Caco-2 (cell line): ENCODE measurements at regions of chr3 and their contacts with region 1.

Region 1: GRCh38 chr3:136577792-136578191 is 174.4 kb downstream of the STAG1 start:
- DNase-seq: peak; percentile 31 to 39
- H3K4me3 ChIP-seq: no peak overlapping the region
- H3K4me3 Mint-ChIP-seq: peak overlapping the region; percentile 5
- H3K27ac Mint-ChIP-seq: peak overlapping the region; percentile 71
- H3K4me1 ChIP-seq: peaks cover 45% of the 10 kb centered on the region
- H3K4me1 Mint-ChIP-seq: peaks cover 30% of the 10 kb centered on the region
- H3K27me3 ChIP-seq: no peaks in the 10 kb centered on the region
- H3K27me3 Mint-ChIP-seq: no peaks in the 10 kb centered on the region
- CTCF ChIP-seq: peak in 1 of 2 experiments; percentile 4

Region 2: GRCh38 chr3:136512381-136512780 is 65.4 kb before region 1 on chr3:
- CTCF ChIA-PET with region 1: no interaction called
- POLR2A ChIA-PET with region 1: no interaction called
- intact Hi-C with region 1: no loop called
- DNase-seq: no peak
- H3K4me3 ChIP-seq: no peak overlapping the region
- H3K4me3 Mint-ChIP-seq: no peak overlapping the region
- H3K27ac Mint-ChIP-seq: no peak overlapping the region
- H3K4me1 ChIP-seq: no peaks in the 10 kb centered on the region
- H3K4me1 Mint-ChIP-seq: no peaks in the 10 kb centered on the region
- H3K27me3 ChIP-seq: no peaks in the 10 kb centered on the region
- H3K27me3 Mint-ChIP-seq: no peaks in the 10 kb centered on the region
- CTCF ChIP-seq: no peak

Region 3: DNA sequence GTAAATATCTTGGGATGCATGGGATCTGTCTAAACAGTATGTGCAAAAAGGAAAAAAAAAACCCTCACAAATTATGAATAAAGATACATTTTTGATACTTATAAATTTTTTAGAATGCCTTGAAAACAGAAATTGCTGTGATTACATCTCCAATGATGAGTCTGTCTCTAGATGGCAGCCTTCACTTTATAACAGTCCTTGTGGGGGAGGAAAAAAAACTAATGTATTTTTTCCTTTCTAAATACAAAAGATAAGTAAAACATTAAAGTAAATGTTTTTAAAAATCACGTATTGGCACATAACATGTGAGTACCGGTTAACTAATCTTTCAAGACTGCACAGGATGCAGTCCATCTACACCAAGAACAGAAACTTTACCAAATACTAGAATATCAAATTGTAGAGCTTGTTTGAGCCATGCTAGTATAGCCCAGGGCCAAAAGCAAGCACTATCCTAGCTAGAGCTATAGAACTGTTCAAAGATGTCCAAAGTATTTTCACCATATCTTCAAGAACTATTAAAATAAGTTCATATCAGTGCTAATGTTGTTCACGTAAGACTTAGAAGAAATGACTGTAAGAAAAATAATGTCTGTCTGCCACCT is 32.0 kb before region 1 on chr3:
- CTCF ChIA-PET with region 1: interaction called, 5 read pairs
- POLR2A ChIA-PET with region 1: no interaction called
- intact Hi-C with region 1: loop called (anchors 2 kb)
- DNase-seq: no peak
- H3K4me3 ChIP-seq: no peak overlapping the region
- H3K4me3 Mint-ChIP-seq: no peak overlapping the region
- H3K27ac Mint-ChIP-seq: no peak overlapping the region
- H3K4me1 ChIP-seq: 0 out of 2 replicates have a peak, but pooled peaks cover 8% of the 10 kb centered on the region
- H3K4me1 Mint-ChIP-seq: peaks cover 10% of the 10 kb centered on the region
- H3K27me3 ChIP-seq: no peaks in the 10 kb centered on the region
- H3K27me3 Mint-ChIP-seq: no peaks in the 10 kb centered on the region
- CTCF ChIP-seq: peak; percentile 10 to 30

Region 4: GRCh38 chr3:136567599-136568188 is 10.1 kb before region 1 on chr3:
- CTCF ChIA-PET with region 1: no interaction called
- POLR2A ChIA-PET with region 1: no interaction called
- intact Hi-C with region 1: loop called (anchors 1 kb)
- DNase-seq: no peak
- H3K4me3 ChIP-seq: no peak overlapping the region
- H3K4me3 Mint-ChIP-seq: no peak overlapping the region
- H3K27ac Mint-ChIP-seq: no peak overlapping the region
- H3K4me1 ChIP-seq: peaks cover 10% of the 10 kb centered on the region
- H3K4me1 Mint-ChIP-seq: peaks cover 24% of the 10 kb centered on the region
- H3K27me3 ChIP-seq: no peaks in the 10 kb centered on the region
- H3K27me3 Mint-ChIP-seq: no peaks in the 10 kb centered on the region
- CTCF ChIP-seq: no peak

Region 5: GRCh38 chr3:136624894-136625815 is 47.4 kb after region 1 on chr3:
- CTCF ChIA-PET with region 1: no interaction called
- POLR2A ChIA-PET with region 1: no interaction called
- intact Hi-C with region 1: loop called (anchors 2 kb)
- DNase-seq: peak; percentile 73 to 80
- H3K4me3 ChIP-seq: no peak overlapping the region
- H3K4me3 Mint-ChIP-seq: peak overlapping the region; percentile 73
- H3K27ac Mint-ChIP-seq: peak overlapping the region; percentile 87
- H3K4me1 ChIP-seq: peaks cover 40% of the 10 kb centered on the region
- H3K4me1 Mint-ChIP-seq: peaks cover 36% of the 10 kb centered on the region
- H3K27me3 ChIP-seq: no peaks in the 10 kb centered on the region
- H3K27me3 Mint-ChIP-seq: no peaks in the 10 kb centered on the region
- CTCF ChIP-seq: no peak

Region 6: DNA sequence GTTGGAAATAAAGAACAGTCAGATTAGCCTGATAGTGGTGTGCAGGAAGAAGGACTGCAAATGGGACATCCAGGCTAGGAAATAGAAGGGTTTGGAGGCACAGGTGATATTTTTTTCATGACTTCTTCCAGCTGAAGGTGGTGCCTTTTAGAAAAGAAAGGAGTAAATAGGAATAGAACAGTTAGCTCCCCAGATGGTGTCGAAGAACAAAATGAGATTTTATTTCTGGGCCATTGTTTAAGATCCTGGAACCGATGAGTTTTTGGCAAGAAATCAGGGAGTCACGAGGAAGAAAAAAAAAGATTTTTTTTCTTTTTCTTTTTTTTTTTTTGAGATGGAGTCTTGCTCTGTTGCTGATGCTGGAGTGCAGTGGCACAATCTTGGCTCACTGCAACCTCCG is 274.4 kb after region 1 on chr3:
- CTCF ChIA-PET with region 1: no interaction called
- POLR2A ChIA-PET with region 1: interaction called, 14 read pairs
- intact Hi-C with region 1: no loop called
- DNase-seq: no peak
- H3K4me3 ChIP-seq: no peak overlapping the region
- H3K4me3 Mint-ChIP-seq: no peak overlapping the region
- H3K27ac Mint-ChIP-seq: no peak overlapping the region
- H3K4me1 ChIP-seq: no peaks in the 10 kb centered on the region
- H3K4me1 Mint-ChIP-seq: no peaks in the 10 kb centered on the region
- H3K27me3 ChIP-seq: no peaks in the 10 kb centered on the region
- H3K27me3 Mint-ChIP-seq: no peaks in the 10 kb centered on the region
- CTCF ChIP-seq: no peak